ENCODE measurements at regions of chr2 and their contacts with region 1.

Region 1: GRCh38 chr2:189709501-189710221 is 35.2 kb downstream of the ANKAR start:
- DNase-seq: no peak
- H3K4me3 ChIP-seq: no peak overlapping the region
- H3K27ac ChIP-seq: no peak overlapping the region
- H3K27me3 ChIP-seq: no peaks in the 10 kb centered on the region
- CTCF ChIP-seq: no peak

Region 2: DNA sequence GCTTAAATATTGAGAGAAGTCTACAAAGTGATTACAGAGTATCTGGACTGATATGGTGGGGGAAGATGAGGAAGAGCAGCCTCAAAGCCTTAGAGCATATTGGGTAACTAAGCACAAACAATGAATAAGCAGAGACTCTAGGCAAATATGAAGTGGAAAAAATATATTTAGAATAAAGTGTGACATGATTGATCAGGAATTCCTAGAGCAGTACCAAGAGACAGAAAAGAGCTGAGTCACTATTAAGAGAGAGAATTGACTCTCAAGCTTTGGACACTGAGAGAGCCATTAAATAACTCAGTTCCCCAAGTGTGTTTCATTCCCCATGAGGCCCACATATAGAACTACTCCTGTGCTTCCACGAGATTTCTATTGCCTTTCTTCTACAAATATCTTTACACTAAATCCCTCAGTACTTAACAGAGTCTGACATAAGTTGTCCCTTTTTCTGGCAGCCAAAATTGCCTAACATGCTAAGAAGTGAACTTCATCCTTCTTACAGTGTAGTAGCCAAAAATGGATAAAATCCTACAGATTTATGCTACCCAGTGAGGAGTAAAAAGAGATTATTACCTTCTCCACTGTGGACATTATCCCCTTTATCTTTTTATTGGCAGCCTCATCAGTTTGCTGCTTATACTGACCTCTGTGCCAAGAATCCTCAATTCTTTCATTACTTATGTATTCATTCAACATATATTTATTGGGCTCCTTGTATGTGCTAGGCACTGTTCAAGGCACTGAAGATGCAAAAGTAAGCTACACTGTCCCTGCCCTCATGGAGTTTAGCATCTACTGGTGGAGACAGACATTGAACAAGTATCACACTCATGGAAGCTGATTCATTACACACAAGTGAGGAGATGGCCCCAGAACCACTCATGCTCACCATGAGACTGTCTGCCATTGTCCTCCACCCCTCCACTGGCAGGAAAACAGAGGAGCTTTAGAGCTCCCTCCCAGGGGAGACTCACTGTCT is 174.5 kb before region 1 on chr2:
- CTCF ChIA-PET with region 1: no interaction called
- POLR2A ChIA-PET with region 1: no interaction called
- DNase-seq: peak; percentile 26
- H3K4me3 ChIP-seq: no peak overlapping the region
- H3K27ac ChIP-seq: no peak overlapping the region
- H3K27me3 ChIP-seq: no peaks in the 10 kb centered on the region
- CTCF ChIP-seq: no peak

Region 3: DNA sequence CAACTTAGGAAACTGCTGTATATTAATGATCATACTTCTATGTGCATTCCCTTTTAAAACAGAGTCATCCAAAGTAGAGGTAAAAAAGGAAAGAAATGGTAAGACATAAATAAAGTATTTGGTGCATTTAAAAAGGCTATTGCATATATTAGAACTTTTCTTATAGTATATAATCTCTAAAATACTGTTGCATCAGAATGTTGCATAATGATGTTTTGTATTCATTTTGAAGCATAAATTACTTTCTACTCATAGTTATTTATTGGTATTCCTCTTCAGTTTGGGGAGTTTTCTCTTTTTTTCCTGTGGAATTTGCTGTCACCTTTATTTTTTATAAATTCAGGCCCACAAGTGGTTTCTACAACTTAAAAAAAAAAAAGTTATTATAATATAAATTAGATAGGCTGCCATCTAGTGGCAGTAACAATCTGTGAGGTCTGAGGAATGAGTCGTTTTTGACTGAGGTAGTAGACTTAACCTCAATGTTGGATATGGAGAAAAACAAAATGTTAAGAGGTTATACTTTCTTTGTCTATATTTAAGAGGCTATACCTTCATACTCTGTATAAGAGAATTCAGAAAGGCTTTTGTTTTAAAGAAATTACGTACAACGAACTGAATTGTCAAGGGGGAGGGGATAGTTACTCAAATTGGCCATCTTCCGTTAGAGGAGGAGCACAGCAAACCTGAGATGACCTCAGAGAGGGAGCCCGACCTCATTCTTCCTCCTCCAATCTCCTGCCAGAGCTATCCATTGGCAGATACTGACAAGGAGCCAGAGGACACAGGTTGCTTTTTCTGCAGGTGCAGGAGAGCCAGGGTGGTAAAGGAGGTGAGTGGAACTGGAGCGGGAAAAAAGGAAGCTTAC is 11.4 kb before region 1 on chr2:
- CTCF ChIA-PET with region 1: interaction called, 10 read pairs
- POLR2A ChIA-PET with region 1: no interaction called
- DNase-seq: no peak
- H3K4me3 ChIP-seq: no peak overlapping the region
- H3K27ac ChIP-seq: no peak overlapping the region
- H3K27me3 ChIP-seq: no peaks in the 10 kb centered on the region
- CTCF ChIP-seq: peak; percentile 65

Region 4: GRCh38 chr2:189723192-189723591 is 13.5 kb after region 1 on chr2:
- CTCF ChIA-PET with region 1: no interaction called
- POLR2A ChIA-PET with region 1: no interaction called
- DNase-seq: no peak
- H3K4me3 ChIP-seq: no peak overlapping the region
- H3K27ac ChIP-seq: no peak overlapping the region
- H3K27me3 ChIP-seq: no peaks in the 10 kb centered on the region
- CTCF ChIP-seq: no peak

Measured in AG04450 (cell line).